SK-N-SH (cell line): ENCODE measurements at regions of chr9 and their contacts with region 1.

Region 1: GRCh38 chr9:135500525-135501358 is at the start of gene MRPS2:
- DNase-seq: peak; percentile 98
- H3K4me3 ChIP-seq: peak within 1 kb of the TSS; percentile 95 to 96
- H3K27ac ChIP-seq: peak within 1 kb of the TSS; percentile 60 to 76; a peak in 2 of 4 replicates
- H3K4me1 ChIP-seq: peaks cover 6 to 19% of the 10 kb centered on the region in 2 experiments; a peak in 3 of 4 replicates
- H3K27me3 ChIP-seq: no peaks in the 10 kb centered on the region
- CTCF ChIP-seq: peak; percentile 65
- EP300 ChIP-seq: no peak; a peak in 1 of 4 replicates
- RAD21 ChIP-seq: no peak
- polyA plus RNA-seq, gene MRPS2: 113 and 116 TPM in 2 replicates

Region 2: GRCh38 chr9:133955821-133956411 is 1544.8 kb before region 1 on chr9:
- CTCF ChIA-PET with region 1: no interaction called
- POLR2A ChIA-PET with region 1: no interaction called
- DNase-seq: peak; percentile 78
- H3K4me3 ChIP-seq: 0 out of 4 replicates have a peak overlapping the region, but pooled peaks of 1 of the 2 experiments have one; percentile 35
- H3K27ac ChIP-seq: peak overlapping the region; percentile 43 to 46; a peak in 3 of 4 replicates
- H3K4me1 ChIP-seq: peaks cover 17 to 56% of the 10 kb centered on the region in 2 experiments
- H3K27me3 ChIP-seq: no peaks in the 10 kb centered on the region
- CTCF ChIP-seq: no peak
- EP300 ChIP-seq: no peak
- RAD21 ChIP-seq: no peak

Region 3: DNA sequence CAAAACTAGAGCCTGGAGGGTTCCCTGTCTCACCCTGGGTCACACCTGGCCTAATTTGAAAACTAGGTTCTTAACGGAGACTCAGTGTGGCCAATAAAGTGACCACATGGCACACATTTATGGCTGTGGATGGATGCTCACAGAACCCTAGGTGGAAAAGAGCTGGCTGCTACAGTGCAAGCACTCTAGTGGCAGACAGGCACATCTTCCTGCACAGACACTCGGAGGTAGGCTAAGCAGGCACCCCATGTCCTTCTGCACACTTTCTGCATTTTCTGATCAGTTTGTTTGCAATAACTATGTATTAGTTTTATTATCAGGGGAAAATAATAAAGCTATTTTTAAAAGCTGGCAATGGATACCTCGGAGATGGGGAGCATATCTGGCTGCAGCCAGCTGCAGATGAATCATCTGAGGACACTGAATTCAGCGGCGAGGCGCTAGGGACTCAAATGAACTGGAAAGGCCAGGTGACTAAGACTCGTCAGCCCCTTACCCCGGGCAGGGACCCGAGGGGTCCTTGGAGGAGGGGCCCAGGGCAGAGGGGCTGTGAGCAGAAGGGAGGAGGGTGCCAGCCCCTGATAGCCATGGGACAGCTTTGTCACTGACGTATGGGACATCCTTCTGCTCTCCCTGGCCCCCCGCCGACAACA is 317.1 kb before region 1 on chr9:
- CTCF ChIA-PET with region 1: no interaction called
- POLR2A ChIA-PET with region 1: no interaction called
- DNase-seq: no peak
- H3K4me3 ChIP-seq: no peak overlapping the region
- H3K27ac ChIP-seq: no peak overlapping the region; a peak in 1 of 4 replicates
- H3K4me1 ChIP-seq: peaks cover 0 to 34% of the 10 kb centered on the region in 2 experiments; a peak in 1 of 4 replicates
- H3K27me3 ChIP-seq: no peaks in the 10 kb centered on the region
- CTCF ChIP-seq: no peak
- EP300 ChIP-seq: no peak
- RAD21 ChIP-seq: no peak

Region 4: GRCh38 chr9:135480071-135480941 is 20.4 kb before region 1 on chr9:
- CTCF ChIA-PET with region 1: interaction called, 23 read pairs
- POLR2A ChIA-PET with region 1: interaction called, 9 read pairs
- DNase-seq: peak; percentile 82
- H3K4me3 ChIP-seq: peak overlapping the region; percentile 88 to 90
- H3K27ac ChIP-seq: peak overlapping the region in 1 of 2 experiments; percentile 74; a peak in 2 of 4 replicates
- H3K4me1 ChIP-seq: peaks cover 6 to 13% of the 10 kb centered on the region in 2 experiments; a peak in 2 of 4 replicates
- H3K27me3 ChIP-seq: no peaks in the 10 kb centered on the region
- CTCF ChIP-seq: no peak
- EP300 ChIP-seq: no peak
- RAD21 ChIP-seq: no peak

Region 5: DNA sequence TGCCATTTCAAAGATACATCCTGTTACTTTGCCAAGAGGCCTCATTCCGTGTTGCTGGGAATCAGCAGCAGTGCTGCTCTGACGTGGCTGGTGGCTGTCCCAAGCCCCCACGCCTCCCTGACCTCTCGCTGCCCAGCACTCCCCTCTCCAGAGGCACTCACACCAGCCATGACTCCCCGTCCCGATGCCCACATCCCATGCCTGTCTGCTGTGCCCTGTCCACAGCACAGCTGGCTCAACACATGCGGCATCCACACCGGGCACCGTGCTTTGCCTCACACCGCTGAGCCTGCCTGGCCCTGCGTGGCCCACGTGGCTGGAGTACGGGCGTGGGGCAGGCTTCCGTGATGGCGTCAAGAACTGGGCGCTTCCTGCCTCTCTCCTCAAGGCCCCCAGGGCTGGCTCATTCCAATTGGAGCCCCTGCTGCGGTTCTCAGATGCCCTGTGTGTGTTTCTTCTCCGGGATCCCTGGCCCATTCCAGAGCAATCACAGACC is 12.7 kb after region 1 on chr9:
- CTCF ChIA-PET with region 1: interaction called, 23 read pairs
- POLR2A ChIA-PET with region 1: no interaction called
- DNase-seq: no peak
- H3K4me3 ChIP-seq: no peak overlapping the region
- H3K27ac ChIP-seq: no peak overlapping the region
- H3K4me1 ChIP-seq: no peaks in the 10 kb centered on the region; a peak in 1 of 4 replicates
- H3K27me3 ChIP-seq: no peaks in the 10 kb centered on the region
- CTCF ChIP-seq: no peak
- EP300 ChIP-seq: no peak
- RAD21 ChIP-seq: no peak

Region 6: GRCh38 chr9:135551031-135551430 is 50.3 kb after region 1 on chr9:
- CTCF ChIA-PET with region 1: interaction called, 11 read pairs
- POLR2A ChIA-PET with region 1: no interaction called
- DNase-seq: no peak
- H3K4me3 ChIP-seq: no peak overlapping the region
- H3K27ac ChIP-seq: no peak overlapping the region
- H3K4me1 ChIP-seq: no peaks in the 10 kb centered on the region
- H3K27me3 ChIP-seq: no peaks in the 10 kb centered on the region
- CTCF ChIP-seq: no peak
- EP300 ChIP-seq: no peak
- RAD21 ChIP-seq: no peak